ENCODE measurements at regions of chr2 and their contacts with region 1.

Region 1: DNA sequence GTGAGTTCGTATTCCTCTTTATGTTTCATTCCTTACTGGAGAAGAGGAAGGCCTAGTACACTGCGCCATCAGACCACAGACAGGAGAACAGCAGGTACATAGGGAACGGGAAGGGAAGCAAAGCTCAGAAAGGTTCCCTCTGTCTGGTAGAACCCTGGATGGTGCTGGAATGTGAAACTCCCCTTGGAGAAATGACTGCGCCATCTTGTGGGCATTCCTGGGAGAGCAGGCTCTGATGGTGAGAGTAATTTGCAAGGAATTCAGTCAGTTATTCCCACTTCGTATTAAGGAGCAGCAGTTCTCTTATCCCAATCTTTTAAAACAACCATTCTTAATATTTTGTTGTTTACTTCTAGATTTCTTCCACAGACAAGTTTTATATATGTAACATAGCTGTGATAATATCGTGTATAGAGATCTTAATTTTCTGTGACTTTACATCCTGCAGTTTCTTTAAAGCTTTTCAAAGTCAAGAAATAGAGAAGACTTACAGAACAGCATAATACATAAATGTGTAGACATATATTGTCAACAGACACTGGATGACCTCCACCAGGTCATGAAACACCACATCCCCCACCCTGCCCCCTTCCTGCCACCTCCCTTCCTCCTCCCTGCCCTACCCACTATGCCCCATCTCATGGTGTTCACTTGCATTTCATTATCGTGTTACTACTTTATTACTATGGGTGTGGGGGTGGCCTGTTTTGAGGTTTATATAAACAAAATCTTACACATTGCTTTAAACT is 83.9 kb downstream of the ARHGEF4 start:
- DNase-seq: peak; percentile 87
- H3K4me3 Mint-ChIP-seq: no peak overlapping the region
- H3K27ac Mint-ChIP-seq: no peak overlapping the region
- H3K4me1 Mint-ChIP-seq: no peaks in the 10 kb centered on the region
- H3K27me3 Mint-ChIP-seq: peaks cover 4% of the 10 kb centered on the region

Region 2: GRCh38 chr2:130873700-130874346 is 46.8 kb before region 1 on chr2:
- intact Hi-C with region 1: loop called (anchors 5 kb)
- DNase-seq: peak; percentile 91
- H3K4me3 Mint-ChIP-seq: no peak overlapping the region
- H3K27ac Mint-ChIP-seq: no peak overlapping the region
- H3K4me1 Mint-ChIP-seq: peaks cover 1% of the 10 kb centered on the region
- H3K27me3 Mint-ChIP-seq: peaks cover 8% of the 10 kb centered on the region

Region 3: GRCh38 chr2:130930740-130931659 is 10.4 kb after region 1 on chr2:
- intact Hi-C with region 1: no loop called
- DNase-seq: no peak
- H3K4me3 Mint-ChIP-seq: no peak overlapping the region
- H3K27ac Mint-ChIP-seq: no peak overlapping the region
- H3K4me1 Mint-ChIP-seq: no peaks in the 10 kb centered on the region
- H3K27me3 Mint-ChIP-seq: peaks cover 23% of the 10 kb centered on the region